Activated CD8-positive, alpha-beta T cell treated with anti-CD3 and anti-CD28 coated beads for 36 hours (primary cell): ENCODE measurements at regions of chr2 and their contacts with region 1.

Region 1: GRCh38 chr2:197268786-197269584 is 41.6 kb downstream of the ANKRD44 start:
- DNase-seq: peak; percentile 69
- ATAC-seq: peak; percentile 60
- H3K4me3 Mint-ChIP-seq: no peak overlapping the region
- H3K27ac Mint-ChIP-seq: peak overlapping the region; percentile 90
- H3K4me1 Mint-ChIP-seq: peaks cover 91% of the 10 kb centered on the region
- H3K27me3 Mint-ChIP-seq: no peaks in the 10 kb centered on the region
- CTCF ChIP-seq: no peak

Region 2: GRCh38 chr2:197279997-197280746 is 11.2 kb after region 1 on chr2:
- CTCF ChIA-PET with region 1: interaction called, 7 read pairs
- POLR2A ChIA-PET with region 1: interaction called, 20 read pairs
- intact Hi-C with region 1: loop called (anchors 2 kb)
- DNase-seq: no peak
- ATAC-seq: peak; percentile 66
- H3K4me3 Mint-ChIP-seq: peak overlapping the region; percentile 61
- H3K27ac Mint-ChIP-seq: peak overlapping the region; percentile 88
- H3K4me1 Mint-ChIP-seq: peaks cover 75% of the 10 kb centered on the region
- H3K27me3 Mint-ChIP-seq: no peaks in the 10 kb centered on the region
- CTCF ChIP-seq: no peak

Region 3: GRCh38 chr2:197286805-197287598 is 18.0 kb after region 1 on chr2:
- CTCF ChIA-PET with region 1: interaction called, 4 read pairs
- POLR2A ChIA-PET with region 1: interaction called, 20 read pairs
- intact Hi-C with region 1: loop called (anchors 2 kb)
- DNase-seq: peak; percentile 70
- ATAC-seq: peak; percentile 92
- H3K4me3 Mint-ChIP-seq: peak overlapping the region; percentile 70
- H3K27ac Mint-ChIP-seq: peak overlapping the region; percentile 100
- H3K4me1 Mint-ChIP-seq: peaks cover 76% of the 10 kb centered on the region
- H3K27me3 Mint-ChIP-seq: no peaks in the 10 kb centered on the region
- CTCF ChIP-seq: no peak